CD4-positive, alpha-beta T cell (primary cell): ENCODE measurements at regions of chr17 and their contacts with region 1.

Region 1: DNA sequence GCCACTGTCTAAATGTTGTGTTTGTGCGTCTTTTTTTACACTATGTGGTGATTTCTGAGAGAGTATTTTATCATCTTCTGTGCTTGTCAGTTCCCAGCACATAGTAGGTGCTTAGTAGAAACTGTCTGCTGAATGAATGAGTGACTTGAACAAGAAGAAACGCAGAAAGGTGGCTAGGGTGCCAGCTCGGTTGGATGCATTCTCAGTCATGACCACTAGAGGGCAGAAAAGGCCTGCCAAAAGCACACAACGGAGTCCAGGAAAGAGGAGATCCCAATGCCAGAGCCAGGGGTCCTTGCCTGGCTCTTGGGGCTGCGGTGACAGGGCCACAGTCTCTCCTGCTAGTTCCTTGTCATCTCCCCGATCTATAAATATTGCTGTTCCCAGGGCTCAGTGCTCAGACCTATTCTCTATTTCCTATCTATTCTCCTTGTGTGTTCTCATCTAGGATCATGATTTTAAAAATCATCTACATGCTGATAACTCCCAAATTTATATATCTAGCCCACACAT is 57.3 kb upstream of the CCL1 start:
- DNase-seq: peak; percentile 46 to 77 (median 52)
- ATAC-seq: peak; percentile 51
- H3K4me3 ChIP-seq: no peak overlapping the region
- H3K4me3 Mint-ChIP-seq: no peak overlapping the region
- H3K27ac ChIP-seq: no peak overlapping the region
- H3K27ac Mint-ChIP-seq: no peak overlapping the region
- H3K4me1 ChIP-seq: peaks cover 7% of the 10 kb centered on the region
- H3K4me1 Mint-ChIP-seq: no peaks in the 10 kb centered on the region
- H3K27me3 ChIP-seq: peaks cover 18 to 27% of the 10 kb centered on the region in 2 experiments
- H3K27me3 Mint-ChIP-seq: peaks cover 46% of the 10 kb centered on the region
- CTCF ChIP-seq: peak; percentile 98

Region 2: GRCh38 chr17:34403006-34403405 is 17.3 kb before region 1 on chr17:
- CTCF ChIA-PET with region 1: no interaction called
- POLR2A ChIA-PET with region 1: no interaction called
- intact Hi-C with region 1: no loop called
- DNase-seq: no peak
- ATAC-seq: no peak
- H3K4me3 ChIP-seq: no peak overlapping the region
- H3K4me3 Mint-ChIP-seq: no peak overlapping the region
- H3K27ac ChIP-seq: no peak overlapping the region
- H3K27ac Mint-ChIP-seq: no peak overlapping the region
- H3K4me1 ChIP-seq: no peaks in the 10 kb centered on the region
- H3K4me1 Mint-ChIP-seq: no peaks in the 10 kb centered on the region
- H3K27me3 ChIP-seq: peaks cover 0 to 7% of the 10 kb centered on the region in 2 experiments
- H3K27me3 Mint-ChIP-seq: peaks cover 1% of the 10 kb centered on the region
- CTCF ChIP-seq: no peak

Region 3: DNA sequence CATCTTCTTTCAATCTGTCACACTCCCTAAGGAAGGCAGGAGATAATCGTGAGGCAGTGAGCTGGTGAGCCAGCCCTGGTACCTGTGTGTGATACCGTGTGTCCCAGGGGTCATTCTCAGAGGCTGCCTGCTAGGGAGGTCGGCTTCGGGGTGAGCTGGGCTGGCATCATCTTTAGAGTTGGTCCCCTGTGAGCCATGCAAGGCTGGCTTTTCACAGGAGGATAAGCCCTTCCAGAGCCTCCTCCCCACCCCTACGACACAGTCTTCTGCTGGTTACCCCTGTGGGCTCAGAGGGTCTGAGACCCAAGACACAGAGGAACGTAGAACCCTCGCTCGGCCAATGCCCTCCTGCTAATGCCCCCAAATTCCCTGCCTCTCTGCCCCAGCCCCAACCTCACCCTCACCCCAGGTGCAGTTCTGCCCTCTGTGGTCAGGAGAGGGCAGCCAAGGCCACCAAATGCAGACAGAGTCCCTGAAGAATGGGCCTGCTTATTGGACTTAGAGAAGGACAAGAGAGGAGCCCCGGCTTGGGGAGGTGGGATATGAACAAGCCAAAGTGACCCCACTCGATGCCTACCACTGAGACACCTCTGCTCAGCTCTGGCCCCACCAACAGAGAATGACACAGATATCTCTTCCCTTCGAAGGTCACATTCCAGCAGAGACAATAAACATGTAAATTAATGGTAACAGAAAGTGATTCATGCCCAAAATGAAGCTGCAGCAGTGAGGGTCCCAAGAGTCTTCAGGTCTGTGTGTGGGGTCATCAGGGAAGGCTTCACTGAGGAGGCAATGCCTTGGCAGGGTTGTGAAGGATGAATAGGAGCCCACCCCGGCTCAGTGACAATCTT is 23.5 kb after region 1 on chr17:
- CTCF ChIA-PET with region 1: no interaction called
- POLR2A ChIA-PET with region 1: no interaction called
- intact Hi-C with region 1: no loop called
- DNase-seq: peak in 3 of 14 experiments; percentile 1 to 14 (median 7)
- ATAC-seq: no peak
- H3K4me3 ChIP-seq: no peak overlapping the region
- H3K4me3 Mint-ChIP-seq: no peak overlapping the region
- H3K27ac ChIP-seq: no peak overlapping the region
- H3K27ac Mint-ChIP-seq: no peak overlapping the region
- H3K4me1 ChIP-seq: no peaks in the 10 kb centered on the region
- H3K4me1 Mint-ChIP-seq: no peaks in the 10 kb centered on the region
- H3K27me3 ChIP-seq: peaks cover 10 to 18% of the 10 kb centered on the region in 2 experiments
- H3K27me3 Mint-ChIP-seq: peaks cover 37% of the 10 kb centered on the region
- CTCF ChIP-seq: no peak

Region 4: DNA sequence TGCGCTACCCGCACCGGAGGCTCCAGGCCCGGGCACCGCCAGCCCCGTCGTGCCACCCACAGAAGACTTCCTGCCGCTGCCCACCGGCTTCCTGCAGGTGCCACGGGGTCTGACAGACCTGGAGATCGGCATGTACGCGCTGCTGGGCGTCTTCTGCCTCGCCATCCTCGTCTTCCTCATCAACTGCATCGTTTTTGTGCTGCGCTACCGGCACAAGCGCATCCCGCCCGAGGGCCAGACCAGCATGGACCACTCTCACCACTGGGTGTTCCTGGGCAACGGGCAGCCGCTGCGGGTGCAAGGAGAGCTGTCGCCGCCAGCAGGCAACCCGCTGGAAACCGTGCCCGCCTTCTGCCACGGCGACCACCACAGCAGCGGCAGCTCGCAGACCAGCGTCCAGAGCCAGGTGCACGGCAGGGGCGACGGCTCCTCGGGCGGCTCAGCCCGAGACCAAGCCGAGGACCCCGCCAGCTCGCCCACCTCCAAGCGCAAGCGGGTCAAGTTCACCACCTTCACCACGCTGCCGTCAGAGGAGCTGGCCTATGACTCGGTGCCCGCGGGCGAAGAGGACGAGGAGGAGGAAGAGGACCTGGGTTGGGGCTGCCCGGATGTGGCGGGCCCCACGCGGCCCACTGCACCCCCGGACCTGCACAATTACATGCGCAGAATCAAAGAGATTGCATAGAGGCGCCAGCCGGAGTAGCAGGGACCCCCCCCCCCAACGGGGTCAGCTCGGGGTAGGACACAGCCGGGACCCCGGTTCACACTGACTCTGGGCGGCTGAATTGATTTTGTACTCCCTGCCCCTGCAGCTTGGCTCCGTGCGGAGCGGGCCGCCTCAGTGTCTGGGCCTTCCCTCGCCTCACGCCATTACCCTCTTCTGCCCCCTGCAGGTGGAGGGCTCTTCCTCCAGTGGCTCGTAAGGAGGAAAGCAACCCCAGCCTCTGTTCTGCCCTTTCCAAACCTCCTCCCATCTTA is 217.5 kb after region 1 on chr17:
- CTCF ChIA-PET with region 1: no interaction called
- POLR2A ChIA-PET with region 1: no interaction called
- intact Hi-C with region 1: loop called (anchors 1 kb)
- DNase-seq: peak; percentile 70 to 90 (median 78)
- ATAC-seq: peak; percentile 97
- H3K4me3 ChIP-seq: peak overlapping the region; percentile 66
- H3K4me3 Mint-ChIP-seq: peak overlapping the region; percentile 87
- H3K27ac ChIP-seq: no peak overlapping the region
- H3K27ac Mint-ChIP-seq: peak overlapping the region; percentile 14
- H3K4me1 ChIP-seq: peaks cover 18% of the 10 kb centered on the region
- H3K4me1 Mint-ChIP-seq: peaks cover 6% of the 10 kb centered on the region
- H3K27me3 ChIP-seq: no peaks in the 10 kb centered on the region
- H3K27me3 Mint-ChIP-seq: peaks cover 12% of the 10 kb centered on the region
- CTCF ChIP-seq: peak; percentile 77

Region 5: GRCh38 chr17:34892461-34893249 is 472.3 kb after region 1 on chr17:
- CTCF ChIA-PET with region 1: no interaction called
- POLR2A ChIA-PET with region 1: no interaction called
- intact Hi-C with region 1: loop called in 1 of 2 experiments (anchors 10 kb)
- DNase-seq: peak in 6 of 14 experiments; percentile 2 to 52 (median 22)
- ATAC-seq: no peak
- H3K4me3 ChIP-seq: no peak overlapping the region
- H3K4me3 Mint-ChIP-seq: no peak overlapping the region
- H3K27ac ChIP-seq: no peak overlapping the region
- H3K27ac Mint-ChIP-seq: no peak overlapping the region
- H3K4me1 ChIP-seq: peaks cover 3% of the 10 kb centered on the region
- H3K4me1 Mint-ChIP-seq: no peaks in the 10 kb centered on the region
- H3K27me3 ChIP-seq: peaks cover 13 to 14% of the 10 kb centered on the region in 2 experiments
- H3K27me3 Mint-ChIP-seq: peaks cover 48% of the 10 kb centered on the region
- CTCF ChIP-seq: peak; percentile 18

Region 6: GRCh38 chr17:34980681-34981537 is 560.6 kb after region 1 on chr17:
- CTCF ChIA-PET with region 1: no interaction called
- POLR2A ChIA-PET with region 1: no interaction called
- intact Hi-C with region 1: loop called in 1 of 2 experiments (anchors 10 kb)
- DNase-seq: peak; percentile 38 to 91 (median 66)
- ATAC-seq: peak; percentile 80
- H3K4me3 ChIP-seq: peak overlapping the region; percentile 90
- H3K4me3 Mint-ChIP-seq: peak overlapping the region; percentile 94
- H3K27ac ChIP-seq: peak overlapping the region; percentile 92 to 97
- H3K27ac Mint-ChIP-seq: peak overlapping the region; percentile 88
- H3K4me1 ChIP-seq: peaks cover 26% of the 10 kb centered on the region
- H3K4me1 Mint-ChIP-seq: peaks cover 56% of the 10 kb centered on the region
- H3K27me3 ChIP-seq: no peaks in the 10 kb centered on the region
- H3K27me3 Mint-ChIP-seq: no peaks in the 10 kb centered on the region
- CTCF ChIP-seq: peak; percentile 56

Region 7: DNA sequence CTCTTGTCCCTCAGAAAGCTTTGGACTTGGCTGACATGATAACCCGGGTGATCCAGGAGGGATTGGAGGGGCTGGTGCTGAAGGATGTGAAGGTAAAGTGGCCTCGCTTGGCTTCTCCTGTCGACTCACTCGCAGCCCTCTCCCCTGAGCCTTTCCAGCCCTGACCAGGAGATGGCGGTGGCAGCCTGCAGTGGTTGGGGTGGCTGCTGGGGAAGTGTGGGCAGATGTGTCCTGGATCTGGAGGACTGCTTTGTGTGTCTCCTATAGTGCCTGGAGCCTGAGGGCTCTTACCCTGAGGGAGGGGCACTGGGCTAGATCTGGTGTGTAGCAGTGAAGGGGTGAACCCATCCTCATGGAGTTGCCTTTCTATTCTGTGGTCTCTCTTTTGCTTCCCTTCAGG is 577.9 kb after region 1 on chr17:
- CTCF ChIA-PET with region 1: no interaction called
- POLR2A ChIA-PET with region 1: no interaction called
- intact Hi-C with region 1: loop called in 1 of 2 experiments (anchors 5 kb)
- DNase-seq: peak; percentile 69 to 88 (median 76)
- ATAC-seq: peak; percentile 98
- H3K4me3 ChIP-seq: no peak overlapping the region
- H3K4me3 Mint-ChIP-seq: no peak overlapping the region
- H3K27ac ChIP-seq: no peak overlapping the region
- H3K27ac Mint-ChIP-seq: peak overlapping the region; percentile 72
- H3K4me1 ChIP-seq: peaks cover 8% of the 10 kb centered on the region
- H3K4me1 Mint-ChIP-seq: peaks cover 6% of the 10 kb centered on the region
- H3K27me3 ChIP-seq: no peaks in the 10 kb centered on the region
- H3K27me3 Mint-ChIP-seq: no peaks in the 10 kb centered on the region
- CTCF ChIP-seq: peak; percentile 83